ENCODE measurements at regions of chr5 and their contacts with region 1.

Region 1: DNA sequence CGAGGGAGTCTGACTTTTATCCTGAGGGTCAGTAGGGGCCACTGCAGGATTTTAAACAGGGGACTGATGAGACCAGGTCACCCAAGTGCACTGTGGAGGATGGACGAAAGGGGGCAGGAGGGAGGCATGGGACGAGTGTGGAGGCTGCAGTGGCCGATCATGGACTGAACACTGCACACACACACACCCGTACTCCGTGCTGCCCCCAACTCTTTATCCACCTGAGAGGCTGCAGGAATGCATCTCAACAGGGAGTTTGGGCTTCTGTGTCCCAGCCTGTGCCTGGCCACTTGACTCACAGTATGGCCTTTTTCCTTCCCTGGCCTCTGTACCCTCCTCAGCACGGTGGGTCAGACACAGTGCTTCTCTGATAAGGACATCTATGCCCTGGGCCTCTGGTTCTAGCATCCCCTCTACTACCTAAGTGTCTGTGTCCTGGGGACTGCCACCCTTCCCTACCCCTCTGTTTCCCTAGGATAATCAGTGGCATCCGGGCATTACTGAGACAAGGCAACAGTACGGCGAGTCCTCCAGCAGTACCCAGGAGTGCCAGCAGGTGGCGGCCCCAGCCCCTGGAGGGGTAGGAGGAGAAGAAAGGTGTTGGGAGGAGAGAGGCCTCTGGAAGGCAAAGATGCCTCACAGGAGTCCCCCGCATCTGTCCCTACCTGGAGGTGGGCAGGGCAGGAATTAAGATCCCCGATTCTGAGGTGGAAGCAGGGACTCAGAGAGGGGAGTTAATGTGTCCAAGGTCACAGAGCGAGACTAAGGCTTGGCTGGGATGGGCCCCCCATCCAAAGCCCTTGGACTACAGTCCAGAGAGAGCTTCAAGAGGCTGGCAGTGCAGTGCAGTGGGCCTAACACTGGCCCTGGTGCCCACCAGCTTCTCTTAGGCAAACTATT is 5.1 kb upstream of the CDX1 start:
- DNase-seq: peak; percentile 63 to 86 (median 71)
- ATAC-seq: peak; percentile 94
- H3K4me3 ChIP-seq: no peak overlapping the region
- H3K4me3 Mint-ChIP-seq: no peak overlapping the region
- H3K27ac ChIP-seq: no peak overlapping the region
- H3K27ac Mint-ChIP-seq: no peak overlapping the region
- H3K4me1 ChIP-seq: no peaks in the 10 kb centered on the region
- H3K4me1 Mint-ChIP-seq: no peaks in the 10 kb centered on the region
- H3K27me3 ChIP-seq: peaks cover 0 to 3% of the 10 kb centered on the region in 2 experiments
- H3K27me3 Mint-ChIP-seq: peaks cover 17% of the 10 kb centered on the region
- CTCF ChIP-seq: peak; percentile 85

Region 2: GRCh38 chr5:150350524-150351344 is 189.2 kb after region 1 on chr5:
- CTCF ChIA-PET with region 1: interaction called, 4 read pairs
- POLR2A ChIA-PET with region 1: no interaction called
- intact Hi-C with region 1: loop called (anchors 2 to 10 kb)
- DNase-seq: peak in 8 of 9 experiments; percentile 5 to 65 (median 36)
- ATAC-seq: peak; percentile 62
- H3K4me3 ChIP-seq: no peak overlapping the region
- H3K4me3 Mint-ChIP-seq: no peak overlapping the region
- H3K27ac ChIP-seq: no peak overlapping the region
- H3K27ac Mint-ChIP-seq: peak overlapping the region; percentile 58
- H3K4me1 ChIP-seq: peaks cover 14% of the 10 kb centered on the region
- H3K4me1 Mint-ChIP-seq: peaks cover 14% of the 10 kb centered on the region
- H3K27me3 ChIP-seq: no peaks in the 10 kb centered on the region
- H3K27me3 Mint-ChIP-seq: no peaks in the 10 kb centered on the region
- CTCF ChIP-seq: peak; percentile 27